Breast epithelium (tissue), 4 donors: ENCODE measurements at regions of chr1 and their contacts with region 1.

Region 1: DNA sequence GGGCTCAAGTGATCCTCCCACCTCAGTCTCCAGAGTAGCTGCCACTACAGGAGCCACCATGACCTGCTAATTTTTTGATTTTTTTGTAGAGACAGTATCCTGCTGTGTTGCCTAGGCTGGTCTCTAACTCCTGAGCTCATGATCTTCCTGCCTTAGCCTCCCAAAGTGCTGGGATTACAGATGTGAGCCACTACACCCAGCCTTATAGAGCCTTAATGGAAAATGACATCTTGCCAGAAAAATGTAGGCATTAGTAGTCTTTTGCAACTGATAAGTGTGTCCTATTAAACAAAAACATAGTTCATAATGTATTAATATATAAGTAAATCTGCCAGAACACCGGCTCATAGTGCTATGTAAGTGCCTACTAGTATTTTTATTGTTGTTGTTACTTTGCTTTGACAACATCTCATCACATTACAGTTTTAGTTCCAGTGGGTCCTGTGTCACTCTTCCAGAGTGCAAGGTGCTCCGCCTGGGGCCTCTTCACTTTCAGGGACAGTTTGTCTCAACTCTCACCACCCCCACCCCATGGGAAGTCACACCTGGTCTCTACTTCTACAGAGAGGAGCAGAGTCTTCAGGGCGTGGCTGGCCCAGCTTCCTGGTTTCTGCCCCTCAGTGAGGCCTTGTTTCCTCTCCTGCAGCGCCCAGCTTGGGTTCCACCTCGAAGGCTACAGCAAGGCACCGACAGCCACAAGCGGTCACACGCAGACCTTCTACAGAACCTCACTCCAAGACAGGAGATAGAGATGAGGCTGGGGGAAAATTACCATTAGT is 30.1 kb downstream of the RHOU start:
- DNase-seq: no peak
- H3K4me3 ChIP-seq: no peak overlapping the region
- H3K27ac ChIP-seq: no peak overlapping the region
- H3K4me1 ChIP-seq: no peaks in the 10 kb centered on the region
- H3K27me3 ChIP-seq: no peaks in the 10 kb centered on the region
- CTCF ChIP-seq: no peak
- POLR2A ChIP-seq: no peak

Region 2: GRCh38 chr1:228684607-228685006 is 80.8 kb before region 1 on chr1:
- intact Hi-C with region 1: loop called (anchors 5 kb)
- DNase-seq: no peak
- H3K4me3 ChIP-seq: no peak overlapping the region
- H3K27ac ChIP-seq: peak overlapping the region in 1 of 2 donors; percentile 26
- H3K4me1 ChIP-seq: no peaks in the 10 kb centered on the region
- H3K27me3 ChIP-seq: no peaks in the 10 kb centered on the region
- CTCF ChIP-seq: no peak
- POLR2A ChIP-seq: no peak

Region 3: GRCh38 chr1:228751360-228752113 is 13.8 kb before region 1 on chr1:
- intact Hi-C with region 1: no loop called
- DNase-seq: no peak
- H3K4me3 ChIP-seq: no peak overlapping the region
- H3K27ac ChIP-seq: no peak overlapping the region
- H3K4me1 ChIP-seq: no peaks in the 10 kb centered on the region
- H3K27me3 ChIP-seq: no peaks in the 10 kb centered on the region
- CTCF ChIP-seq: no peak
- POLR2A ChIP-seq: no peak

Region 4: DNA sequence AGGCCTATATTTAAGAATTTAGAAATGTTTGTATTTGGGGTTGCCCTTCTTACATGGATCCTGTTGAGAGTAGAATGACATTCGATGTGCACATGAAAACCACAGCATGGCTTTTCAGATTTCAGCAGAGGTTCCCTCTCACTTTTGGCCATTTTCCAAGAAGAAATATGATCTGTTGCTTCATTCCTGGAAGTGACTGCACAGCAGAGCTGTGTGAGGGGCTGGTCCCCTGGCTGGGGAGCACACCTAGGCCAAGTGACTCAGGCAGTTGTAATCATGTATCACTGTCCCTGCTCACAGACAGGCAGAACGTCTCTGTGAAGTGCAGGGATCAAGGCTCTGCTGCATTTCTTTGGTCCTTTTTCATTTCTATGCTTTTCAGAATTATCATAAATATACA is 1916.2 kb after region 1 on chr1:
- intact Hi-C with region 1: no loop called
- DNase-seq: no peak
- H3K4me3 ChIP-seq: no peak overlapping the region
- H3K27ac ChIP-seq: no peak overlapping the region
- H3K4me1 ChIP-seq: no peaks in the 10 kb centered on the region
- H3K27me3 ChIP-seq: no peaks in the 10 kb centered on the region
- CTCF ChIP-seq: no peak
- POLR2A ChIP-seq: no peak